Heart left ventricle (tissue), 16 donors: ENCODE measurements at regions of chr6 and their contacts with region 1.

Region 1: GRCh38 chr6:136317021-136317694 is 27.5 kb upstream of the BCLAF1 start:
- DNase-seq: peak in 3 of 5 donors; percentile 35 to 51 (median 37)
- ATAC-seq: peak in 3 of 4 donors; percentile 36 to 81 (median 58)
- H3K4me3 ChIP-seq: no peak overlapping the region
- H3K27ac ChIP-seq: no peak overlapping the region
- H3K4me1 ChIP-seq: no peaks in the 10 kb centered on the region
- H3K27me3 ChIP-seq: no peaks in the 10 kb centered on the region
- CTCF ChIP-seq: peak; percentile 69 to 88 (median 81)
- POLR2A ChIP-seq: no peak

Region 2: DNA sequence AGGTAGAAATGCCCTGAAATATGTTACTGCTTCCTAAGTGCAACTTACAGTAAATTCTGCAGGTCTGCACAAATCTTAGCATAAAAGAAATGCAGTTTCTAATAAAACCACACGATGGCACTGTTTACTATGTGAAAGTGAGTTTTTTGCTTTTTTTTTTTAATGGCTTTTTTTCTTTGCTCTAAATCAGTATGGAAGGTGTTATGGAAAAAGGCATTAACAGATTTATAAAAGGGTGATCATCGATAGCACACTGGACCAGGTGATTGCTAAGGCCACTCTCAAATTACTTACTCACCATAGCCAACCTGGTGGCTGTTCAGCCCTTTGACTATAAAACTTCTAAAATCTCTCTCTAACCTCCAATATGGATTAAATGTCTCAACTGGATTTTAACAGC is 865.5 kb before region 1 on chr6:
- intact Hi-C with region 1: loop called in 4 of 10 experiments (anchors 2 to 5 kb)
- DNase-seq: no peak
- ATAC-seq: no peak
- H3K4me3 ChIP-seq: no peak overlapping the region
- H3K27ac ChIP-seq: no peak overlapping the region
- H3K4me1 ChIP-seq: no peaks in the 10 kb centered on the region
- H3K27me3 ChIP-seq: no peaks in the 10 kb centered on the region
- CTCF ChIP-seq: peak; percentile 57 to 80 (median 68)
- POLR2A ChIP-seq: no peak

Region 3: DNA sequence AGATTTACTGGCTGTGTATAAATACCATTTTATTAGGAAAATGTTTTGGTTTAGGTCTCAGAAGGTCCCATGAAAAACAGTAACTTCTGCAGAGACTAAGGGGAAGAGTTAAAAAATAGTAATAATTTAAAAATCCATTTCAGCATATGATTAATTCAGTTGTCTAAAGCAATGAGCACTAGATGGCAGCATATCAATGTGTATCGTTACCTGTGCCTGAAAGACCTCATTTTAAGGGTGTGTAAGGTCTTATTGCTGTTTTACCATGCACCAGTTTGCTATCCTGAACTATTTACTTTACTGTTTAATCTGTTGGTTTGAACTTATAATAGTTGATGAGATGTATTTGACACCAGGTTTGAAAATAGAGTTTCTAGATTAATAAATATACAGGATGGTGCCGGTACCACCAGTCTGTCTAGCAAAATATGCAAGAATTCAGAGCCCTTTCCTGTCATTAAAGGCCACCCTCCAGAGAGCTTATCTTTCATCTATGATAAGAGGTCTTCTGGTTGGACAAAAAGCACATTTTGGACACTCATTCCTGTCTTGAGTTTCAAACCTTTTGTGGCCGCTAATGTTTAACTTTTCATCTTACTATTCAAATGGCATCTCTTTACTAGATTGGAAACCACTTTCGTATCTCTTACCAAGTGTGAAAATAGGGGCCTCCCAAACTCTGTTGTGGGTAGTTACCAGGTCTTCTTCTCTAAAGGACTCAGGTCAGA is 810.7 kb before region 1 on chr6:
- intact Hi-C with region 1: loop called (anchors 1 to 10 kb)
- DNase-seq: no peak
- ATAC-seq: peak in 1 of 4 donors; percentile 46
- H3K4me3 ChIP-seq: no peak overlapping the region
- H3K27ac ChIP-seq: no peak overlapping the region
- H3K4me1 ChIP-seq: no peaks in the 10 kb centered on the region
- H3K27me3 ChIP-seq: no peaks in the 10 kb centered on the region
- CTCF ChIP-seq: peak; percentile 44 to 74 (median 59)
- POLR2A ChIP-seq: no peak

Region 4: DNA sequence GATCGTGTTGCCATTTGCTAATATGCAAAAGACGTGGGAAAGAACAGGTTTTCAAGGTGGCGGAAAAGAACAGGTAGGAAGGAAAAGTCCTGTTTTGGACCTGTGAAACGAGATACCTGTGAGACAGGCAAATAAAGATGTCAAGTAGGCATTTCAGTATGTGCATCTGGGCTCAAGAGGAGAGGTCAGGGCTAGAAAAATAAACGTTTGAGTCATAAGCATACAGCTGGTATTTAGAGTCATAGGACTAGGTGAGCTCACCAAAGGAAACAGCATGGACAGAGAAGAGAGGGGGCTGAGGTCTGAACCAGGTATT is 82.0 kb before region 1 on chr6:
- intact Hi-C with region 1: loop called in 2 of 10 experiments (anchors 10 kb)
- DNase-seq: no peak
- ATAC-seq: no peak
- H3K4me3 ChIP-seq: no peak overlapping the region
- H3K27ac ChIP-seq: no peak overlapping the region
- H3K4me1 ChIP-seq: peaks cover 0 to 5% (median 0%) of the 10 kb centered on the region in 12 donors
- H3K27me3 ChIP-seq: no peaks in the 10 kb centered on the region
- CTCF ChIP-seq: no peak
- POLR2A ChIP-seq: no peak

Region 5: GRCh38 chr6:136249811-136250685 is 67.1 kb before region 1 on chr6 and contains the start of gene MTFR2:
- intact Hi-C with region 1: loop called in 1 of 10 experiments (anchors 10 kb)
- DNase-seq: peak; percentile 94 to 97 (median 97)
- ATAC-seq: peak; percentile 98 to 100 (median 99)
- H3K4me3 ChIP-seq: peak within 1 kb of the TSS; percentile 42 to 82 (median 67)
- H3K27ac ChIP-seq: peak within 1 kb of the TSS in 6 of 12 donors; percentile 25 to 65 (median 54)
- H3K4me1 ChIP-seq: peaks cover 0 to 19% (median 13%) of the 10 kb centered on the region in 12 donors
- H3K27me3 ChIP-seq: no peaks in the 10 kb centered on the region
- CTCF ChIP-seq: no peak
- POLR2A ChIP-seq: peak in 1 of 2 donors; percentile 46
- total RNA-seq, gene MTFR2: 0.15 to 1.0 (median 0.34) TPM in 4 of 9 donors, not detected in the others

Region 6: GRCh38 chr6:136989571-136990241 is 672.5 kb after region 1 on chr6:
- intact Hi-C with region 1: no loop called
- DNase-seq: peak in 4 of 5 donors; percentile 39 to 74 (median 45)
- ATAC-seq: peak; percentile 88 to 97 (median 94)
- H3K4me3 ChIP-seq: peak overlapping the region; percentile 16 to 67 (median 56)
- H3K27ac ChIP-seq: peak overlapping the region in 9 of 12 donors; percentile 7 to 69 (median 40)
- H3K4me1 ChIP-seq: peaks cover 0 to 20% (median 3%) of the 10 kb centered on the region in 12 donors
- H3K27me3 ChIP-seq: peaks cover 0 to 47% (median 0%) of the 10 kb centered on the region in 9 donors
- CTCF ChIP-seq: no peak
- POLR2A ChIP-seq: no peak